ENCODE measurements at regions of chr5 and their contacts with region 1.

Region 1: GRCh38 chr5:95822542-95823181 is at the start of gene GLRX:
- DNase-seq: peak in 2 of 3 donors; percentile 67 to 77
- H3K4me3 ChIP-seq: peak within 1 kb of the TSS; percentile 58 to 97 (median 91)
- H3K27ac ChIP-seq: peak within 1 kb of the TSS; percentile 70 to 86
- H3K4me1 ChIP-seq: peaks cover 28 to 83% (median 60%) of the 10 kb centered on the region in 4 experiments
- H3K27me3 ChIP-seq: no peaks in the 10 kb centered on the region

Region 2: DNA sequence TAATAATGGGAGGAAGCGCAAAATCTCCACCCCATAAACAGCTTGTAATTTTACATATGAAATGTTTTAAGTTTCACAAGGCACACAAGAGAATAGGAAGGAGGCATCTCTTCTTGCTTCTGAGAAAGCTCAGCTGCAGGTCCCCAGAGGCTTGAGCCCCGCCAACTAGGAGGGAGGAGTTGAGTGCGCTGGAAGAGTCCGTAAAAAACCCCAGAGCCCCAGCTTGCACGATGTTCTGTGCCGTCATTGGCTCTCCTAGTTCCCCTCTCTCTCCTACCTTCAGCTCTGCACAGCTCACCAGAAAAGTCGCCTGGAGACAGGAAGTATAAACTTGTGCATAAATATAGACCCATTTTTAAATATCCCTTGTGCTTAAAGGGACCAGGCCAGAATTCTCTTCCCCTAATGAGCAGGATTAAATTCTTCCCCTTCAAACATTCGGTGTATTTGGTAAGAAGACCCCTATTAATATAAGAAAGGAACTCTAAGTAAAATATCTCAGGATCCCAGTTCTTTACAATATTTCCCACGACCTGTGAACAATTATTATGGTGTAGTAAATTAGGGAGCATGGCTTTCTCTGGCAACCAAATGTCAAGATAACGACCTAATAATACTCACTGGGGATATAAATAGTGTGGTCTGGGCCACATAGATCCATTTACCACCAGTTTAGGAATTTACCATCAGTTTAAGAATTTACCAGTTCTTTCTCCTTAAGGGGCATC is 13.8 kb before region 1 on chr5:
- CTCF ChIA-PET with region 1: interaction called, 45 read pairs
- POLR2A ChIA-PET with region 1: interaction called, 3 read pairs
- DNase-seq: peak; percentile 86 to 97 (median 96)
- H3K4me3 ChIP-seq: peak overlapping the region in 5 of 7 experiments; percentile 11 to 55 (median 26)
- H3K27ac ChIP-seq: peak overlapping the region; percentile 7 to 57
- H3K4me1 ChIP-seq: peaks cover 24 to 46% (median 36%) of the 10 kb centered on the region in 4 experiments
- H3K27me3 ChIP-seq: no peaks in the 10 kb centered on the region

Region 3: DNA sequence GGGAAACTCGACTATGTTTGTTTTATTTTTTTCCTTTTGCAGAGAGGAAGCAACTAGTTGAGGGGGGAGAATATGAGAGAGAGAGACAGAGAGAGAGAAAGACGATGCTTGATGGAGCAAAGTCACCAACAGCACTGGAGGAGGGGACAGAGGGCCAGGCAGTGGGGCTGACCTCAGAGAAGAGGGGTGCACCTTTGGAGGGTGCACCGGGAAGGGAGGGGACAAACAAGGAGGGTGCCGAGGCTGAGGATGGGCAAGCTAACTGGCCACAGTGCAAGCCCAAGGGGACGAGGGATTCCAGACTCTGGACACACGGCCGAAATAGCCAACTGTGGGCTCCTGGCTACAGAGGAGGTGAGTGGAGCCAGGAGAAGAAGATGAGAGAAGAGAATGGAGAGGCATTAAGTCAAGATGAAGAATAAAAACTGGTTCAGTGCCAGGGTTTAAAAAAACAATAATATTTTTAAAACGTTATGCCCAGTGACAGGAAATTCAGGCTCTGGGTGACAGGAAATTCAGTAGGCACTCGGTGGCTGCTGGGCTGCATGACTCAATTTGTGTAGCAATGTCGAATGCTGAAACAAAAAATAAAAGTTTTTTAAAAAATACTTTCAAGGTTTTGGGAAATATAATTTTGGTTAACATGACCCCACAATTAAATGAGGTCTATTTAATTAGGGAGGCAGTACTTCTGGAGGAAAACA is 13.2 kb after region 1 on chr5:
- CTCF ChIA-PET with region 1: interaction called, 27 read pairs
- POLR2A ChIA-PET with region 1: interaction called, 4 read pairs
- DNase-seq: peak in 2 of 3 donors; percentile 80 to 85
- H3K4me3 ChIP-seq: peak overlapping the region in 6 of 7 experiments; percentile 46 to 82 (median 72)
- H3K27ac ChIP-seq: peak overlapping the region; percentile 37 to 75
- H3K4me1 ChIP-seq: peaks cover 16 to 46% (median 32%) of the 10 kb centered on the region in 4 experiments
- H3K27me3 ChIP-seq: no peaks in the 10 kb centered on the region

Measured in common myeloid progenitor, CD34-positive (primary cell).